ENCODE measurements at regions of chr16 and their contacts with region 1.

Region 1: DNA sequence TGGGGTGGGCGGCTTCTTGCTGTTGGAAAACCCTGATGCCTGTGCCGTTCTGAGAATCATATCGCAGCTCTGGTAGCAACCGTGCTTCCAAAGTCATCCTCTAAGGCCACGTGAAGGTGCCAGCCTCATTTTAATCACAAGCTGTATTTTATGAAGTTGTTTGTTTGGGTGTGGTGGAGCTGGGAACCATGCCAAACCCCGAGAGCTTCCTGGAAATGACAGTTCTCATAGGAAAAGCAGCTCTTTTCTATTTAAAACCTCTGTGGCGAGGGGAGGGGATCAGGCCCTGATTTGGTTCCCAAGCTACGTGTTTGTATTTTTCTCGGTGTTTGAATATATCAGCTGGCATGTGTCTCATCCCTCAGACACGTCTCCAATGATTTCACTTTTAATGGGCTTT is 21.7 kb downstream of the KNOP1 start:
- DNase-seq: peak; percentile 41
- ATAC-seq: peak; percentile 50
- H3K4me3 Mint-ChIP-seq: peak overlapping the region; percentile 11
- H3K27ac Mint-ChIP-seq: no peak overlapping the region
- H3K4me1 Mint-ChIP-seq: peaks cover 15% of the 10 kb centered on the region
- H3K27me3 Mint-ChIP-seq: no peaks in the 10 kb centered on the region

Region 2: DNA sequence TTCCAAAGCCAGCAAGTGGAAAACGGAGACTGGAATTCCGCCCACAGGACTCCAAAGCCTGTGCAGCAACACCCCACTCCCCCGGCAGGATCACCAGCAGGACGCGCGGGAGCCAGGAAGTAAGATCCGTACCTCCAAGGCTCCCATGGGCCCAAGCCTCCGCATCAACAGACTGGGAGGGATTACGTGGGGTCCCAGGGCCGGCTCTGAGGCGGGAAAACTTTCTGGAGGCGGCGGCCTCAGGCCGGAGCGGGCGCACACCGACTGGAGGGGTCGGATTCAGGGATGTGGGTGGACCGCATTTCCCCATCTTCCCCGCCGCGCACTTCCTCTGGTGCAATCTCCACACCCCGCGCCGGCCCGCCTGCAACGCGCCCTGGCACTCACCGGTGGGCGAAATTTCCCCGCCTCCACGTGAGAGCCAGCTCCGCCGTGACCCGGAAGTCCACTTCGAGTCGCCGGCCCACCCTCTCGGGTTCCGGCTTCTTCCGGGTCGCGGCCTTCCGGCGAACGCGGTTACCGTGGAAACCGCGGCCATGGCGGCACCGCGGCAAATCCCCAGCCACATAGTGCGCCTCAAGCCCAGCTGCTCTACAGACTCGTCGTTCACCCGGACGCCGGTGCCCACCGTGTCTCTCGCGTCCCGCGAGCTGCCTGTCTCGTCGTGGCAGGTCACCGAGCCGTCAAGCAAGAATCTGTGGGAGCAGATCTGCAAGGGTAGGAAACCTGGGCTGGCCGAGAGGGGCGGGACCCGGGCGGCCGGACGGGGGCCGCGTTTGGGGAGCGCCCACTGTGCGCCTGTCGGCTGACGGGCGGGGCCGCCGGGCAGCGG is 21.7 kb after region 1 on chr16 and contains the starts of genes IQCK and KNOP1:
- POLR2A ChIA-PET with region 1: interaction called, 10 read pairs
- DNase-seq: peak; percentile 92
- ATAC-seq: peak; percentile 93
- H3K4me3 Mint-ChIP-seq: peak within 1 kb of the TSS; percentile 90
- H3K27ac Mint-ChIP-seq: peak within 1 kb of the TSS; percentile 79
- H3K4me1 Mint-ChIP-seq: peaks cover 18% of the 10 kb centered on the region
- H3K27me3 Mint-ChIP-seq: no peaks in the 10 kb centered on the region
- total RNA-seq, gene IQCK: 1.6 to 2.1 TPM
- total RNA-seq, gene KNOP1: 17.4 to 17.9 TPM

Measured in activated naive CD8-positive, alpha-beta T cell treated with anti-CD3 and anti-CD28 coated beads, Interleukin-2, amount 10 ng/mL, durations not matched to agents 7 days and 5 days (primary cell).